ENCODE measurements at regions of chr20 and their contacts with region 1.

Region 1: DNA sequence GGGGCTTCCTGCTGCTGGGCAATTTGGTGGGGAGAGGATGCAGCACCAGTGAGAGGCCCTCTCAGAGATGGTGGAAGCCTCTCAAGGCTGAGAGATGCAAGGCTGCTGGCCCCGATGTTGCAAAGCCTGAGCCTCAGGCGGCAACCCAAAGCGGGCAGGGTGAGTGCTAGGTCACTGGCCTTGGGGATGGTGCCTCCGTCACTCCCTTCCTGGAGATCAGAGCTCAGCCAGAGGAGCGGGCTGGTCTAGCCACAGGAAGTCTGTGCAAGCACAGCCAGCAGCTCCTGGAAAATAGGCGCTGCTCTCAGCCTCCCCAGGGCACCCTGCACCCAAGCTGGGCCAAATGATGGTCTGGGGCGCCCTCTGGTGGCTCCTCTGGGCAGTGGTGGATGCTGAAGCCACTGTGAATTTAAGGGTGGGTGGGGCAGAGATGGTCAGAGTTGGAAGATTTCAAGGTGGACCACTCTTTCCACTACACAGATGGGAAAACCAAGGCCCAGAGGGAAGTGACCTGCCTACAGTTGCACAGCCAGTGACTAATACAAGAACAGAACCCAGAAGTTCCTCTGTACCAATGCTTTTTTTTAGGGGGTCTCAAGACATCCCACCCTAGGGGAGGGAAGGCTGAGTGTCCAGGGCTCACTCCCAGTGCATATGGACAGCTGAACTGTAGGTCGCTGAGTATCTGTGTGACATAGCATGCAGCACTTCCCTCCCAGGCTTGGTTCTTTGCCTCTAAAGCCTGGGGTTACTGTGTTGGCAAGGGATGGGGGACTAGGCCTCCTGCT is 20.8 kb downstream of the C20orf203 start:
- DNase-seq: peak; percentile 77
- H3K4me3 Mint-ChIP-seq: no peak overlapping the region
- H3K27ac Mint-ChIP-seq: no peak overlapping the region
- H3K4me1 Mint-ChIP-seq: peaks cover 5% of the 10 kb centered on the region
- H3K27me3 Mint-ChIP-seq: no peaks in the 10 kb centered on the region

Region 2: GRCh38 chr20:32521780-32522525 is 131.0 kb before region 1 on chr20:
- intact Hi-C with region 1: loop called (anchors 1 kb)
- DNase-seq: peak; percentile 51
- H3K4me3 Mint-ChIP-seq: no peak overlapping the region
- H3K27ac Mint-ChIP-seq: no peak overlapping the region
- H3K4me1 Mint-ChIP-seq: peaks cover 31% of the 10 kb centered on the region
- H3K27me3 Mint-ChIP-seq: no peaks in the 10 kb centered on the region